ENCODE measurements at regions of chr11 and their contacts with region 1.

Region 1: GRCh38 chr11:32312865-32313403 is 122.4 kb downstream of the WT1 start:
- DNase-seq: peak; percentile 83
- H3K4me3 Mint-ChIP-seq: no peak overlapping the region
- H3K27ac Mint-ChIP-seq: no peak overlapping the region
- H3K4me1 Mint-ChIP-seq: peaks cover 6% of the 10 kb centered on the region
- H3K27me3 Mint-ChIP-seq: no peaks in the 10 kb centered on the region
- CTCF ChIP-seq: peak; percentile 52

Region 2: GRCh38 chr11:32297611-32298011 is 15.3 kb before region 1 on chr11:
- CTCF ChIA-PET with region 1: interaction called, 16 read pairs
- POLR2A ChIA-PET with region 1: no interaction called
- intact Hi-C with region 1: no loop called
- DNase-seq: peak; percentile 50
- H3K4me3 Mint-ChIP-seq: no peak overlapping the region
- H3K27ac Mint-ChIP-seq: no peak overlapping the region
- H3K4me1 Mint-ChIP-seq: no peaks in the 10 kb centered on the region
- H3K27me3 Mint-ChIP-seq: no peaks in the 10 kb centered on the region
- CTCF ChIP-seq: peak; percentile 39

Region 3: DNA sequence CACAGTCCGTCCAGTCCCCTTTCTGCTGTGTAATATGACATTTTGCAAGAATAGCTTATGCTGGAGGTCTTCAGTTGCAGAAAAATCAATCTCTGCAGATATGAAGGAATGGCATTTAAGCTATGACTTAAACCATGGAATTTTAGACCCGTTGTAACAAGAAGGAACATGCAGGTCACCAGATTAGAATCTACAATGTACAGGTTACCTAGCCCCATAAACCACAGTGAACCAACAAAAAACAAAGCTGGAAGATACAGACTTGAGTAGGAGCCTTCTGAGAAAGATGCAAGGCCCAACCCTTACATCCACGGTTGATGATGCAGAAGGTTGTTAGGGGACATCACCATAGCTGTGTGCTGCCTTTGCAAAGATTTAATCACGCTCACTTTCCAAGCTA is 10.1 kb before region 1 on chr11:
- CTCF ChIA-PET with region 1: interaction called, 16 read pairs
- POLR2A ChIA-PET with region 1: no interaction called
- intact Hi-C with region 1: no loop called
- DNase-seq: no peak
- H3K4me3 Mint-ChIP-seq: no peak overlapping the region
- H3K27ac Mint-ChIP-seq: no peak overlapping the region
- H3K4me1 Mint-ChIP-seq: no peaks in the 10 kb centered on the region
- H3K27me3 Mint-ChIP-seq: no peaks in the 10 kb centered on the region
- CTCF ChIP-seq: no peak

Region 4: GRCh38 chr11:32323814-32324130 is 10.8 kb after region 1 on chr11:
- CTCF ChIA-PET with region 1: interaction called, 13 read pairs
- POLR2A ChIA-PET with region 1: no interaction called
- intact Hi-C with region 1: no loop called
- DNase-seq: no peak
- H3K4me3 Mint-ChIP-seq: no peak overlapping the region
- H3K27ac Mint-ChIP-seq: no peak overlapping the region
- H3K4me1 Mint-ChIP-seq: no peaks in the 10 kb centered on the region
- H3K27me3 Mint-ChIP-seq: peaks cover 38% of the 10 kb centered on the region
- CTCF ChIP-seq: no peak

Region 5: GRCh38 chr11:32500001-32500400 is 187.1 kb after region 1 on chr11:
- CTCF ChIA-PET with region 1: no interaction called
- POLR2A ChIA-PET with region 1: no interaction called
- intact Hi-C with region 1: no loop called
- DNase-seq: no peak
- H3K4me3 Mint-ChIP-seq: no peak overlapping the region
- H3K27ac Mint-ChIP-seq: no peak overlapping the region
- H3K4me1 Mint-ChIP-seq: no peaks in the 10 kb centered on the region
- H3K27me3 Mint-ChIP-seq: no peaks in the 10 kb centered on the region
- CTCF ChIP-seq: no peak

Region 6: DNA sequence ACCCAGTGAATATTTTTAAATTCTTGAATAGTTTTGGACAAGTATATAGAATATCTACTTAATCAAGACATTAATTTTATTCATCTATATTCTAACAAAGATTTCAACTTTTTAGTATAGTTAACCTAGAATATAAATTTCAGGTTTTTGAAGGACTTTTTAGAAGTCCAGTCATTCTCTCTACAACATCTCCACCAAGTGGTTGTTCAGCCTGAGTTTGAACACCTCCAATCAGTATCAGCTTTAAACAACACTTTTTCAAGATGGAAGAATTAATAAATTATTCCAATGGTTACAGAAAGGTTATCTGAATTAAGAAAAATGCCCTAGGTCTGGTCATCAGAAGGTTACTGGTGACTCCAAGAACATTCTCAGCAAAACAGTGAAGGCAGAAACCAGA is 302.5 kb after region 1 on chr11:
- CTCF ChIA-PET with region 1: no interaction called
- POLR2A ChIA-PET with region 1: no interaction called
- intact Hi-C with region 1: loop called (anchors 2 kb)
- DNase-seq: peak; percentile 6
- H3K4me3 Mint-ChIP-seq: no peak overlapping the region
- H3K27ac Mint-ChIP-seq: no peak overlapping the region
- H3K4me1 Mint-ChIP-seq: no peaks in the 10 kb centered on the region
- H3K27me3 Mint-ChIP-seq: no peaks in the 10 kb centered on the region
- CTCF ChIP-seq: peak; percentile 15

Measured in MCF 10A (cell line).